ENCODE measurements at regions of chr6 and their contacts with region 1.

Region 1: GRCh38 chr6:41675176-41675770 is 37.0 kb downstream of the MDFI start:
- DNase-seq: no peak
- H3K4me3 ChIP-seq: no peak overlapping the region
- H3K27ac ChIP-seq: no peak overlapping the region
- H3K4me1 ChIP-seq: no peaks in the 10 kb centered on the region
- H3K27me3 ChIP-seq: no peaks in the 10 kb centered on the region

Region 2: GRCh38 chr6:41298785-41299502 is 376.3 kb before region 1 on chr6:
- in situ Hi-C with region 1: no loop called
- DNase-seq: no peak
- H3K4me3 ChIP-seq: no peak overlapping the region
- H3K27ac ChIP-seq: no peak overlapping the region
- H3K4me1 ChIP-seq: no peaks in the 10 kb centered on the region
- H3K27me3 ChIP-seq: 0 out of 2 replicates have a peak, but pooled peaks cover 2% of the 10 kb centered on the region

Region 3: DNA sequence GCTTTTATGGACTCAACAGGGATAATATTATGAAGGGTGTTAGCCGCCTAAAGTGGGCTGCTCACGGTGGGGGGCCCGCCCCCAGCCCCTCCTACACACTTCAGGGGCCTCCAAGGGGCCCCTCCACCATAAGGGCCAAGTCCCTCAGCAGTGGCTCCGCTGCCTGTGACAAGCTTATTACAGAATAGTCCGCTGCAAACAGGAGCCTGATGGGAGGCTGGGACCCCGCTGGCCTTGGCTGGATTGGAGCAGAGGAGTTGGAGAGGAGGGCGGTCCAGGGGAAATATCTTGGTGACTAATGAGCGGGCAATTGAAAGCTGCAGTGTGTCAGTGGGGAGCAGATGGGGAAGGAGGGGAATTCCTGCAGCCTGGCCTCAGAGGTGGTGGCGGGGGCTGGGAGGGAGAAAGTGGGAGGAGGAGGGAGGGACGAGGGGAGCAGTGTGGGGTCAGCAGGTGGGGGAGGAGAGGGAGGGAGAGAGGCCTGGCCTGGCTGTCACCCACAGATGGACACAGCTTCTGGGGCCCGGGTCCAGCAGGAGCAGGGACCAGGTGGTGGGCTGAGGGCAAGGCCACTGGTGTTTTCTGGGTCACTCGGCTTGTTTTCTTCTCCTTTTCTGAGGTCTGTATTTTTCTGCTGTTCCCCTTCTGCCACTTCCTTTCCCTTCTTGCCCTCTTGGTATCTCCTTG is 186.7 kb before region 1 on chr6:
- in situ Hi-C with region 1: no loop called
- DNase-seq: peak; percentile 39
- H3K4me3 ChIP-seq: no peak overlapping the region
- H3K27ac ChIP-seq: no peak overlapping the region
- H3K4me1 ChIP-seq: no peaks in the 10 kb centered on the region
- H3K27me3 ChIP-seq: peaks cover 5% of the 10 kb centered on the region; the same call in 1 of the 2 replicates

Region 4: DNA sequence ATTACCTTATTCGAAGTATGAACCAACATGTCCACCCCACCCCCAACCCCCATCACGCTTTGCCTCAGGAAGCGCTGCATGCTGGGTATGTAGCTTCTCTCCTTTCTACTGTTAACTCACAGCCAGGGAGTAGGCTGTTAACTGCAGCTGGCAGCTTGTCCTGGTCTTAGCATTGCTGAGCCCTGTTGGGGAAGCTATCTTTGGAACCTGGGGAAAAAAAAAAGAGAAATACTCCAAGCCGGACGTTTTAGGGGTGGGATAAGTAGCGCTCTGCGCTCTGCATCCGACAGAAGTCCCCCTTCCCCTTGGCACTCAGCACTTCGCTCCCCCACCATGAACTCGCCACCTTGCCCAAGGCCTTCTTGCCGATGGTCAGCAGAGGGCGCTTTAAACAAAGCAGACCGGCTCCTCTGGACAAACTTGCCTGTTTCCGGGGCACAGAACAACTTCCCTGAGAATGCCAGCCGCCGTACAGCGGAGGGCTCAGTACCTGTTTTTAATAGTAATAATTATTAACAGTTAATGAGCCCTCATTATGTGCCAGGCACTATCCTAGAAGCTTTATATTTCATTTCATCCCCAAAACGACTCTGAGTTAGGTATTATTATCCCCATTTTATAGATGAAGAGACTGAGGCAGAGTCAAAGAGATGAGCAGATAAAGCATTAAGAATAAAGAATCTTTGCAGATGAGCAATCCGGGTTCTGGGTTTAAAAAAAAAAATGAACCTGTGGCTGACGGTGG is 72.2 kb before region 1 on chr6:
- in situ Hi-C with region 1: loop called (anchors 10 kb)
- DNase-seq: peak; percentile 87
- H3K4me3 ChIP-seq: peak overlapping the region; percentile 61
- H3K27ac ChIP-seq: no peak overlapping the region
- H3K4me1 ChIP-seq: no peaks in the 10 kb centered on the region
- H3K27me3 ChIP-seq: no peaks in the 10 kb centered on the region